ENCODE measurements at regions of chr21 and their contacts with region 1.

Region 1: GRCh38 chr21:45140346-45140940 is 66.1 kb downstream of the ADARB1 start:
- DNase-seq: peak; percentile 82 to 91 (median 84)
- ATAC-seq: peak; percentile 95
- H3K4me3 ChIP-seq: no peak overlapping the region
- H3K27ac ChIP-seq: no peak overlapping the region
- H3K4me1 ChIP-seq: peaks cover 19 to 23% of the 10 kb centered on the region in 2 experiments; a peak in 4 of 5 replicates
- H3K27me3 ChIP-seq: no peaks in the 10 kb centered on the region; a peak in 1 of 5 replicates
- CTCF ChIP-seq: peak; percentile 98 to 99 (median 99)
- EP300 ChIP-seq: 0 out of 2 replicates have a peak, but pooled peaks have one; percentile 31
- POLR2A ChIP-seq: no peak
- RAD21 ChIP-seq: peak; percentile 92 to 96

Region 2: GRCh38 chr21:44949779-44950198 is 190.7 kb before region 1 on chr21:
- CTCF ChIA-PET with region 1: interaction called, 51 read pairs
- POLR2A ChIA-PET with region 1: interaction called, 4 read pairs
- in situ Hi-C with region 1: loop called (anchors 5 kb)
- intact Hi-C with region 1: loop called (anchors 1 kb)
- DNase-seq: peak; percentile 82 to 88 (median 84)
- ATAC-seq: peak; percentile 97
- H3K4me3 ChIP-seq: no peak overlapping the region
- H3K27ac ChIP-seq: no peak overlapping the region
- H3K4me1 ChIP-seq: peaks cover 0 to 71% of the 10 kb centered on the region in 2 experiments; a peak in 2 of 5 replicates
- H3K27me3 ChIP-seq: no peaks in the 10 kb centered on the region
- CTCF ChIP-seq: peak; percentile 90 to 97 (median 93)
- EP300 ChIP-seq: no peak
- POLR2A ChIP-seq: no peak
- RAD21 ChIP-seq: peak; percentile 83 to 91

Region 3: DNA sequence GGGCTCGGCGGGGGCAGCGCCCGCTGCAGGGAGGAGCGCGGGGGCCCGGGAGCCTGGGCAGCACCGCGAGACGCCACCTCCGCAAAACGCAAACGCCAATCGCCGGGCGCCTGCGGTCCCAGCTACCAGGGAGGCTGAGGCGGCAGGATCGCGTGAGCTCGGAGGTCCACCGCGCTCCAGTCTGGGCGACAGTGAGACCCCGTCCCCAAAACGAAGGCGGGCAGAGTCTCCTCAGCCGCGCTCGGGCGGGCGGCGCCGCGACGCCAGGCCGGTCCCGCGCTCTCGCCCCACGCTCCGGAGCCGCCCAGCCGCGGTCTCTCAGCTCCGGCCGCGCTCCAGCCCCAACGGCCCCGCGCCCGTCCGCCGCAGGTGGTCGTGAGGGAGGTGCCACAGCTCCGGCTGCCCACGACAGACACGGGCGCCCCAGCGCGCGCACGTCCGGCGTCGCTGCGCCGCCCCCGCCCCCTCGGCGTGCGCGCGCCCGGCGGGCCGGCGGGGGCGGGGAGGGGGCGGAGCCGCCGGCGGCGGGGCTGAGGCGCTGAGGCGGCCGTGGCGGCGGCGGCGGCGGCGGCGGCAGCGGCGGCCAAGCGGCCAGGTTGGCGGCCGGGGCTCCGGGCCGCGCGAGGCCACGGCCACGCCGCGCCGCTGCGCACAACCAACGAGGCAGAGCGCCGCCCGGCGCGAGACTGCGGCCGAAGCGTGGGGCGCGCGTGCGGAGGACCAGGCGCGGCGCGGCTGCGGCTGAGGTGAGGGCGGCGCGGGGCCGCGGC is 66.2 kb before region 1 on chr21 and contains the start of gene ADARB1:
- CTCF ChIA-PET with region 1: interaction called, 4 read pairs
- POLR2A ChIA-PET with region 1: no interaction called
- in situ Hi-C with region 1: no loop called
- intact Hi-C with region 1: loop called (anchors 2 kb)
- DNase-seq: peak; percentile 88 to 97 (median 96)
- ATAC-seq: peak; percentile 80
- H3K4me3 ChIP-seq: peak within 1 kb of the TSS; percentile 63
- H3K27ac ChIP-seq: peak within 1 kb of the TSS; percentile 68
- H3K4me1 ChIP-seq: peaks cover 39 to 40% of the 10 kb centered on the region in 2 experiments
- H3K27me3 ChIP-seq: no peaks in the 10 kb centered on the region; a peak in 1 of 5 replicates
- CTCF ChIP-seq: no peak
- EP300 ChIP-seq: no peak
- POLR2A ChIP-seq: peak; percentile 53; the same call in 1 of the 2 replicates
- RAD21 ChIP-seq: no peak
- polyA plus RNA-seq, gene ADARB1: 7.1 to 8.1 TPM

Region 4: DNA sequence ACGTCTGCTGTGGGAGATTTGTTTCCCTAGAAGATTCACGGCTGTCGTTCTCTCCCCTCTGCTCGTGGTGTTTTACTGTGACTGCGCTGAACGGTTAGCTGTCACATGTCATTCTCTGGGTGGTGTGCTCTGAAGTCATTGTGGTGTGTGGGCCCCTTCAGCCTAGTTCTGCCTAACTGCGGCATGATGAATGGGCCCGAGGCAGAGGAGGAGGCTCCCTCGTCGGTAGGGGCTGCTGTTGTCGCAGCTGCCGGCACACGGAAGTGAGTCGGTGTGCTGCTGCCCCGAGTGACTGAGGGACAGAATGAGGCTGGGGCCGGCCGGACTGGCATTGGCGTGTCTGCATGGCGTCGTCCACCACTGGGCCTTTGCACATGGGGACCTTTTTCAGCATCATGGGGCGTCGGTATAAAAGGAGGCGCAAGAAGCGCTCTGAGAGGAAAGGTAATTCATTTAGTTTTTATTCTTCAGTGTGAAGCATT is 11.9 kb after region 1 on chr21:
- CTCF ChIA-PET with region 1: no interaction called
- POLR2A ChIA-PET with region 1: interaction called, 13 read pairs
- in situ Hi-C with region 1: no loop called
- intact Hi-C with region 1: no loop called
- DNase-seq: peak; percentile 75 to 92 (median 84)
- ATAC-seq: peak; percentile 99
- H3K4me3 ChIP-seq: no peak overlapping the region; the same call in 1 of the 2 replicates
- H3K27ac ChIP-seq: peak overlapping the region; percentile 30; the same call in 1 of the 3 replicates
- H3K4me1 ChIP-seq: peaks cover 15 to 22% of the 10 kb centered on the region in 2 experiments; a peak in 4 of 5 replicates
- H3K27me3 ChIP-seq: no peaks in the 10 kb centered on the region
- CTCF ChIP-seq: peak; percentile 97
- EP300 ChIP-seq: peak; percentile 55; the same call in 1 of the 2 replicates
- POLR2A ChIP-seq: peak; percentile 44; the same call in 1 of the 2 replicates
- RAD21 ChIP-seq: peak; percentile 90 to 97

Region 5: GRCh38 chr21:45309069-45309986 is 168.9 kb after region 1 on chr21:
- CTCF ChIA-PET with region 1: interaction called, 13 read pairs
- POLR2A ChIA-PET with region 1: no interaction called
- in situ Hi-C with region 1: no loop called
- intact Hi-C with region 1: no loop called
- DNase-seq: peak; percentile 78 to 82 (median 81)
- ATAC-seq: peak; percentile 89
- H3K4me3 ChIP-seq: no peak overlapping the region
- H3K27ac ChIP-seq: no peak overlapping the region
- H3K4me1 ChIP-seq: peaks cover 20 to 32% of the 10 kb centered on the region in 2 experiments; a peak in 4 of 5 replicates
- H3K27me3 ChIP-seq: peaks cover 13 to 66% of the 10 kb centered on the region in 2 experiments; a peak in 4 of 5 replicates
- CTCF ChIP-seq: peak; percentile 87 to 99 (median 90)
- EP300 ChIP-seq: no peak
- POLR2A ChIP-seq: no peak
- RAD21 ChIP-seq: peak; percentile 45 to 80

Region 6: GRCh38 chr21:45820171-45821091 is 680.0 kb after region 1 on chr21:
- CTCF ChIA-PET with region 1: interaction called, 5 read pairs
- POLR2A ChIA-PET with region 1: no interaction called
- in situ Hi-C with region 1: loop called (anchors 10 kb)
- intact Hi-C with region 1: loop called (anchors 2 kb)
- DNase-seq: peak; percentile 91 to 96 (median 95)
- ATAC-seq: peak; percentile 96
- H3K4me3 ChIP-seq: no peak overlapping the region
- H3K27ac ChIP-seq: no peak overlapping the region
- H3K4me1 ChIP-seq: peaks cover 0 to 7% of the 10 kb centered on the region in 2 experiments; a peak in 2 of 5 replicates
- H3K27me3 ChIP-seq: peaks cover 29 to 67% of the 10 kb centered on the region in 2 experiments
- CTCF ChIP-seq: peak; percentile 94 to 98 (median 95)
- EP300 ChIP-seq: no peak
- POLR2A ChIP-seq: no peak
- RAD21 ChIP-seq: peak; percentile 84 to 95

Measured in K562 (cell line).